ENCODE measurements at regions of chr14 and their contacts with region 1.

Region 1: GRCh38 chr14:89973234-89973823 is 17.6 kb downstream of the TDP1 start:
- DNase-seq: peak; percentile 40
- H3K4me3 ChIP-seq: no peak overlapping the region
- H3K27ac ChIP-seq: no peak overlapping the region
- H3K4me1 ChIP-seq: no peaks in the 10 kb centered on the region
- H3K27me3 ChIP-seq: no peaks in the 10 kb centered on the region
- CTCF ChIP-seq: peak; percentile 86 to 89

Region 2: DNA sequence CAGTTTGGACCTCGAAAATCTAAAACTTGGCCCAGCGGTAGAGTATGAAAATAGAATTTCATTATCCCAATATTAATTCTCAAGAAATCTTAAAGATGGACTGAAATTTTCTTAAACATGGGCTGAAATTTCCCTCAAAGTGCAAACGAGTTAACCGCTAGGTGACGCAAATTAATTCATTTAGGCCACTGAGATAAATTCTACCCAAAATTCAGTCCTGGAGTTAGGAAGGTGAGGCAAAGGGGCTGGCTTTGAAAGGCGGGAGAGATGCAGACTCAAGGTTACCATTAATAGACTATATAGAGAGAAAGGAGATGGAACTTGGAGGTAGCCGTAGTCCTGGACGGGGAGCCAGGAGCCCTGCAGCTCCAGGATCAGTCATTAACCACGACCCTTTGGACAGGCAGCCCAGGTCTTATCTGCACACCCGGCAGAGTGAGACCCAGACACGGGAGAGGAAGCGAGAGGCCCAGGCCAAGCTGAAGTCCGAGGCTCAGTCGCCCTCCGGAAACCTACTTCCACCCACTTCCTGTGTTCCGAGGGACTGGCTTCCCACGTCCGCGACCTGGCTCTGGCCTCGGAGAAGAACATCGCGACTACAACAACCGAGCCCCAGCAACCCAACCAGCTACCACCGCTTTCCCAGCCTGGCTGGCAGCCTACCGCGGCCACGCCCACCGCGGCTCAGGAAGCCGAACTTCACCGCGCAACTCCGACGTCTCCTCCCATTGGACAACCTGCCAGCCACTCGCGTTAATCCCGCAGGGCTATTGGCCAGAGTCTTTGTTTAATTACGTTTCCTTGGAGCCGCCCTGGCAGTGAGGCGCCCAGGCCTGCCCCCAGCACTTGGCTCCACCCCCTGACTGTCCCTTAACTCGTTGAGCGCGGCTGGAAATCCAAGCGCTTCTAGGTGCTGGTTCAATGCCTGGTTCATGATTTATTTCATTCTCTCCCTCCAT is 19.0 kb before region 1 on chr14 and contains the start of gene EFCAB11:
- CTCF ChIA-PET with region 1: no interaction called
- dilution Hi-C with region 1: no loop called
- in situ Hi-C with region 1: no loop called
- intact Hi-C with region 1: loop called (anchors 2 kb)
- DNase-seq: peak; percentile 99
- H3K4me3 ChIP-seq: peak within 1 kb of the TSS; percentile 46 to 92 (median 69)
- H3K27ac ChIP-seq: peak within 1 kb of the TSS; percentile 88
- H3K4me1 ChIP-seq: peaks cover 25% of the 10 kb centered on the region
- H3K27me3 ChIP-seq: no peaks in the 10 kb centered on the region
- CTCF ChIP-seq: peak; percentile 18 to 30
- total RNA-seq, gene EFCAB11: 4.0 to 13.8 TPM

Region 3: GRCh38 chr14:90060312-90060964 is 87.1 kb after region 1 on chr14:
- CTCF ChIA-PET with region 1: no interaction called
- dilution Hi-C with region 1: no loop called
- in situ Hi-C with region 1: no loop called
- intact Hi-C with region 1: loop called (anchors 2 kb)
- DNase-seq: peak; percentile 67
- H3K4me3 ChIP-seq: peak overlapping the region; percentile 41 to 49 (median 44)
- H3K27ac ChIP-seq: no peak overlapping the region
- H3K4me1 ChIP-seq: peaks cover 24% of the 10 kb centered on the region
- H3K27me3 ChIP-seq: peaks cover 34% of the 10 kb centered on the region
- CTCF ChIP-seq: peak; percentile 22 to 55

Region 4: DNA sequence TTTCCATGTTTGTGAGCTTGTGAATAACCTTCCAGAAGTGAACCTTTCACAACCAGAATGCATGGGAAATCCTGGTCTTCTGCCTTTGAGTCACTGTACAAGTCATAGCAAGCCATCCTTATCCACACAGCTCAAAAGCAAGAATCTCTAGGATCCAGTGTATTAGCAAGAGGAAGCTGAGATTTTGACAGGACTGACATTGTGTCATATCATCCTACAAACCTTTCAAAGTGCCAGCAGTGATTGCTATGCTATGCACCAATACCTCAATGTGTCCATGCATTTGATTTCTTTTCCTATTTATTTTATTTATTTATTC is 371.9 kb after region 1 on chr14:
- CTCF ChIA-PET with region 1: no interaction called
- dilution Hi-C with region 1: no loop called
- in situ Hi-C with region 1: no loop called
- intact Hi-C with region 1: no loop called
- DNase-seq: peak; percentile 84
- H3K4me3 ChIP-seq: no peak overlapping the region
- H3K27ac ChIP-seq: no peak overlapping the region
- H3K4me1 ChIP-seq: no peaks in the 10 kb centered on the region
- H3K27me3 ChIP-seq: no peaks in the 10 kb centered on the region
- CTCF ChIP-seq: no peak

Region 5: GRCh38 chr14:90697577-90698206 is 724.4 kb after region 1 on chr14:
- CTCF ChIA-PET with region 1: no interaction called
- dilution Hi-C with region 1: no loop called
- in situ Hi-C with region 1: no loop called
- intact Hi-C with region 1: loop called (anchors 2 kb)
- DNase-seq: peak; percentile 62
- H3K4me3 ChIP-seq: no peak overlapping the region
- H3K27ac ChIP-seq: no peak overlapping the region
- H3K4me1 ChIP-seq: no peaks in the 10 kb centered on the region
- H3K27me3 ChIP-seq: no peaks in the 10 kb centered on the region
- CTCF ChIP-seq: peak; percentile 94 to 95

Measured in mammary epithelial cell (primary cell).